ENCODE measurements at regions of chr13 and their contacts with region 1.

Region 1: DNA sequence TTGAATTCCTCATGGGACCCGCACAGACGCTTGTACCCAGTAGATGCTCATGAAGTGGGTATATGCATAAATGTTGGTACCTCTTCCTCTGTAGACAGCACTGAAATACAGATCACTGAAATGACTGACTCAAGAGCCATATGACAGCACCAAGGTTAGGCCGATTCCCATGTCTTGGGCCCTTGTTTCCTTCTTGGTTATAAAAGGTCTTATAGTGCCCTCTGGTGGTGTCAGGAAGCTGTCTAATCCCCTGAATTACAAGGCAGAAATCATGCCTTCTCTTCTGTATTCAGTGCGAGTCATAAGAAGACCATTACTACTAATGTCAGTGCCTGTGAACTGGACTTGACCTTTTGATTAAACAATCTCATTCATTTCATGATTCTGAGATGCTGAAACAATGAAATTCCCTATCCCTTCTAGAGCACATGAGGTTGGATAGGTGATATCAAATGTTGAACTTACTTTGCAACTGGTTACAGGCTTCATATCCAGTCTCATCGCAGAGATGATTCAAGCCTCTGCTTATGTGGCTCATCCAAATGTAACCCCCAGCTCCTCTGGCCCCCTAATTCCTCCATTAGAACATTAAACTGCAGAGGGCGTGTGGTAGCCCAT is 59.7 kb downstream of the SPATA13 start:
- DNase-seq: peak; percentile 40 to 68
- H3K4me3 ChIP-seq: no peak overlapping the region
- H3K27ac ChIP-seq: peak overlapping the region; percentile 75
- H3K4me1 ChIP-seq: peaks cover 39% of the 10 kb centered on the region
- H3K27me3 ChIP-seq: no peaks in the 10 kb centered on the region
- CTCF ChIP-seq: peak; percentile 86

Region 2: DNA sequence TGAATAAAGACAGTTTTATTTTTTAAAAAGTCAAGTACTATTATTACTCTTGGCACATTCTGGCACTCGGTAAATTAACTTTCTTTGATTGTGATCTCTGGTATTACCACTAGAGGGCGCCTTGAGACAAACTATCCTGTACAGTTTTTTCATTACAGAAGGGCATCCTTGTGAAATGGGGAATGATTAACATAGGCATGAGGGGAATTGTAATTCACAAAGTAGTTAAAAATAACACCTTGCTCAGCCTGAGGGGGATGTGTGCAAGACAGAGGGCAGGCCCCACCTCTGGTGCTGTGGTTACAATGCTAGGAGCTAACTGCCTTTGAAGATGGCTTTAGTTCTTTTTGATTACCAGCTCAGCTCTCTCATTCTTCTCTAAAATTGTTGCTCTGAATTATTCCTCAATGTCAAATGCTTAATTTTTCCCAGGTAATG is 298.7 kb before region 1 on chr13:
- CTCF ChIA-PET with region 1: no interaction called
- POLR2A ChIA-PET with region 1: no interaction called
- intact Hi-C with region 1: loop called (anchors 1 kb)
- DNase-seq: peak; percentile 6 to 43
- H3K4me3 ChIP-seq: no peak overlapping the region
- H3K27ac ChIP-seq: no peak overlapping the region
- H3K4me1 ChIP-seq: no peaks in the 10 kb centered on the region
- H3K27me3 ChIP-seq: peaks cover 7% of the 10 kb centered on the region; the same call in 1 of the 2 replicates
- CTCF ChIP-seq: peak; percentile 88

Region 3: DNA sequence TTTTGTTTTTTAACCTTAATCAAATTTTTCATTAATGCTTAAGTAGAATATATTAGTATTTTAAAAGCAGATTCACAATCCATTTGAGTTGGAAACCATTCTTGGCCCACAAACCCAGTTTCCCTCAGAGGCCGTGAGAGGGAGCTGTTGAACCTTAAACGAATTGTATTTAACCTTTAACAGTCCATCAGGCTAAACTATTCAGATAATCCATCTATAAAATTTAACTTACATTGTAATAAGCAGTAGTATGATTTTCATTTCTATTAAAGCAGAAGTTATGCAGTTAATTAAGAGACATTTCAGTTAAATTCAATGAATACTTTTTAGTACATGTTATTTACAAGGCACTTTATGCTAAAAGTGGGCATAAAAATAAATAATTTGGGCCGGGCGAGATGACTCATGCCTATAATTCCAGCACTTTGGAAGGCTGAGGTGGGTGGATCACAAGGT is 199.8 kb before region 1 on chr13:
- CTCF ChIA-PET with region 1: interaction called, 4 read pairs
- POLR2A ChIA-PET with region 1: no interaction called
- intact Hi-C with region 1: loop called (anchors 1 kb)
- DNase-seq: peak; percentile 35 to 45
- H3K4me3 ChIP-seq: no peak overlapping the region
- H3K27ac ChIP-seq: no peak overlapping the region
- H3K4me1 ChIP-seq: no peaks in the 10 kb centered on the region
- H3K27me3 ChIP-seq: no peaks in the 10 kb centered on the region
- CTCF ChIP-seq: peak; percentile 84

Region 4: GRCh38 chr13:24053519-24054251 is 166.5 kb before region 1 on chr13:
- CTCF ChIA-PET with region 1: interaction called, 3 read pairs
- POLR2A ChIA-PET with region 1: no interaction called
- intact Hi-C with region 1: loop called (anchors 1 kb)
- DNase-seq: peak; percentile 55 to 78
- H3K4me3 ChIP-seq: no peak overlapping the region
- H3K27ac ChIP-seq: no peak overlapping the region
- H3K4me1 ChIP-seq: peaks cover 14% of the 10 kb centered on the region
- H3K27me3 ChIP-seq: no peaks in the 10 kb centered on the region
- CTCF ChIP-seq: peak; percentile 89

Region 5: GRCh38 chr13:24148399-24149305 is 71.5 kb before region 1 on chr13:
- CTCF ChIA-PET with region 1: no interaction called
- POLR2A ChIA-PET with region 1: no interaction called
- intact Hi-C with region 1: loop called (anchors 1 kb)
- DNase-seq: peak; percentile 81 to 99
- H3K4me3 ChIP-seq: peak overlapping the region; percentile 28; the same call in 1 of the 2 replicates
- H3K27ac ChIP-seq: peak overlapping the region; percentile 92
- H3K4me1 ChIP-seq: peaks cover 61% of the 10 kb centered on the region
- H3K27me3 ChIP-seq: no peaks in the 10 kb centered on the region
- CTCF ChIP-seq: peak; percentile 51; the same call in 1 of the 2 replicates